ENCODE measurements at regions of chr11 and their contacts with region 1.

Region 1: GRCh38 chr11:123560006-123560405 is 94.4 kb downstream of the SCN3B start:
- DNase-seq: peak; percentile 54
- CTCF ChIP-seq: no peak

Region 2: DNA sequence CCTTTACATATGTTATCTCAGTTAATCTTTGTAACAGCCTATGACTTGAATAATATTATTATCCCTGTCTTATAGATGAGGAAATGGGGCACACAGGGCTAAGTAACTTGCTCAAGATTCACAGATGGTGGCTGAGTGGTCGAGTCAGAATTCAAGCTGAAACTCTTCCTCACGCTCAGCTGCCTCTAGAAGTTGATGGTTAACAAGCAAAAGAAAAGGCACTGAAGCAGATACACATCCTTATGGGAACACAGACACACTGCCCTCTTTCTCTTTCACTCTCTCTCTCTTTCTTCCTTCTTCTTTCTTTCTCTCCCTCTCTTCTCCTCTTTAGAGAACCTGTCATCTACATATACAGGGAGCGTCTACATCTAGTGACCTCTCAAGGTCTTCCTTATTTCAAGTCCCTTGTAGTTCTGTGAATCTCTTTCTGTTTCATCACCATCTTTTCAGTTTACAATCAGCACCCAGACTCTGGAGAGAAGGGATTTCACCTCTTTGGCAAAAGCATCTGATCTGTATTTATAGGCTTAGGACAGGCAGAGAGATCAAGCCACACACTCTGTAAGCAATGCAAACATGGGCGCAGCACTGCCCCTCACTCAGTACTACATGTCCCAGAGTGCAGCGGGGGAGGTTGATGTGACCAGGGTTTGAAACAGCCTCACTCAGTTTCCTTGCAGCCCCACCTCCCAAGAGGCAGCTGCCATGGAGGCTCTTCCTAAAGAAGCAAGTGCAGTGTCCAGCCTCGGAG is 54.3 kb before region 1 on chr11:
- CTCF ChIA-PET with region 1: interaction called, 11 read pairs
- POLR2A ChIA-PET with region 1: no interaction called
- DNase-seq: no peak
- CTCF ChIP-seq: no peak

Region 3: DNA sequence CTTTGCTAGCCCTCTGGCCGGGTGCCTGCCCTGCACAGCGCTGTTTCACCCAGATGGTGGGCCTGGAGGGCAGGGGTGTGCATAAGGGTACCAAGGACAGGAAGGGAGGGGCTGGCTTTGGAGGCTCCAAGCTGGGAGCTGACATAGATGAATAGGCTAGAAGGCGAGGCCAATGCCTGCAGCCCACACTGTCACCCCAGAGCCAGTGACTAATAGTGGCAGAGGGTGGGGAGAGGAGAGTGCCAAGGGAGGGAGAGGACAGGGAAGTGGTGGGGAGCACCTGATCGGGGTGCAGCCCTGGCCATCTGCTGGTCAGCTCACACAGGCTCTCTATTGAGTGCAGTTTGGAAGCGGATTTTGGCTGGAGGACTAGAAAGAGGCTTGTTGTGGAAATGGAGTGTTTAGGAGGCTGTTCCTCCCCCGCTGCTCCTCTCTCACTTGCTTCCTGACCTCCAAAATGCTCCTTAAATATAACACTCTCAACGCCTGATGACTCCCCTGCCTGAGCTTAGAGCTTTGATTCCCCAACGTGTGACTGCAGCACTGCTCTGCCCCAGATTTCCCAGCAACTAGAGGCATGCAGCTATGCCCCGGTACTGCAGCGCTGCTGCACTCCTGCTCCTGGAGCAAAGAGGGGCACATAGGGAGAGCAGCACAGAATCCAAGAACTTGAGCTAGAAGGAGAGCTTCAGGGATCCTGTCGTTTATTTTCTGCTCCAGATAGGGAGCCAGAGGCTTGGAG is 40.8 kb before region 1 on chr11:
- CTCF ChIA-PET with region 1: interaction called, 11 read pairs
- POLR2A ChIA-PET with region 1: no interaction called
- DNase-seq: no peak
- CTCF ChIP-seq: no peak

Region 4: DNA sequence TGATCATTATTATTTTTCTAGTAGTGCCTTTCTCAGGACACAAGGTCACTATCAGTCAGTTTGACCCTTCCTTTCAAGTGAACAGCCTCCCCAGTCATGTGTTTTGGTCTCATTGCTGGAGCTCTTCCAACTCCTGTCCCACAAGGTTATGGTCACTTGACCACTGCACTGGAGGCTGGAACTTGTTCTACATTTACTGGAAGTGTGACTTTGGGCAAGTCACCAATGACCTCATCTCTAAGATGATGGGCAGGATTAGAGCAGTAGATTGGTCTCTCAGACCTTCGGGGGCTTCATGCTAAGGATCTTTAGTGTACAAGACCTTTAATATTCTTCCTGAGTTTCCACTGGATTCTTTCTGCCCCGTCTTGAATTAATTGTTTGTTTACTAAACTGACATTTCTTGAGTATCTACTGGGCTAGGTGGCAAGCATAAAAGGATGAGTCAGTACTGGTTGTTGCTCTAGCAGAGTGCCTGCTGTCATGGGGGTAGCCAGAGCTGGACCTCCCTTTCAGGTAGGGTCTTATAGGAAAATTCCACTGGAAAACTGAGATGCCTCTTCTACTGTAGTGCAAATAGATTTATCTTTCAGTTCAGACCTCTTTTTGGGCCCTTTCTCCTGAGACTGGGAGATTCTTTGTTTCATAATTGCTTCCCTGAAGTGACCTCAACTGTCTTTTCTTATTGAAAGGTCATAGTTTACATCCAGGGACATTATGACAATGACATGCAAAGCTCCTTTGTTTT is 23.1 kb before region 1 on chr11:
- CTCF ChIA-PET with region 1: interaction called, 28 read pairs
- POLR2A ChIA-PET with region 1: no interaction called
- DNase-seq: no peak
- CTCF ChIP-seq: no peak

Region 5: GRCh38 chr11:123570939-123571580 is 11.1 kb after region 1 on chr11:
- CTCF ChIA-PET with region 1: interaction called, 41 read pairs
- POLR2A ChIA-PET with region 1: no interaction called
- DNase-seq: no peak
- CTCF ChIP-seq: no peak

Measured in GM10248 (cell line).